ENCODE measurements at regions of chr1 and their contacts with region 1.

Region 1: GRCh38 chr1:172532700-172533509 is at the start of gene SUCO:
- DNase-seq: peak; percentile 100
- H3K4me3 ChIP-seq: peak within 1 kb of the TSS; percentile 87 to 96
- H3K27ac ChIP-seq: peak within 1 kb of the TSS; percentile 98 to 99
- H3K4me1 ChIP-seq: peaks cover 0 to 27% (median 22%) of the 10 kb centered on the region in 4 donors
- H3K27me3 ChIP-seq: no peaks in the 10 kb centered on the region
- CTCF ChIP-seq: no peak

Region 2: DNA sequence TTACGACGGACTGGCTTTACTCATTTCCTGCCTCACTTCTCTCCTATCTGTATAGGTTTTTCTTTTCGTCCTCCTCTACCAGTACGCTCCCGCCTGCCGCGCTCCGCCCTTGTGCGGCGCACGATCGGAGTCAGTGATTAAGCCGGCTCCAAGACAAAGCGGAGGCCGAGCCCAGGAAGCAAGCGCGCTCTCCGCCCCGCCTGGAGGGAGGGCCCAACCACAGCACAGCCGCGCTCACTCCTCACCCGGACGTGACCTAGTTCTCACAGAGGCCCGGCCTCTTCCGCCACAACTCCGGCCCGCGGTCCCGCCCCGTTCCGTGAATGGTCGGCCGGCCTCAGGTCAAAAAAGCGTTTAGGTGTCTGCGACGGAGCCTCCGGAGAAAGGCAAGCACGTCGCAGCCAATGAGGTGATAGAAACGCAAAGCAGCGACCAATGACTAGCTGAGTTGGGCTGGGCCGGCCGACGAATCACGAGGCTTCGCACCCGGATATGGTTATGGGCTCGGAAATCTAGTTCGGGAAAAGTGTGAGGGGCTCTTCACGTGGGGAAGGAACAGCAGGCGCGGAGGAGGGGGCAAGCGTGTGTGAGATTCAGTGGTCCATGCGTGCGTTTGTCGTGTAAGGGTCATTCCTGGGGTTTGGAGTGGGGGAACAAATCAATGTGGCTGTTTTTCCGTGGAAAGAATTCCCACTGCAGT is 751.6 kb before region 1 on chr1 and contains the start of gene METTL13:
- intact Hi-C with region 1: loop called (anchors 10 kb)
- DNase-seq: peak; percentile 99
- H3K4me3 ChIP-seq: peak within 1 kb of the TSS; percentile 71 to 76
- H3K27ac ChIP-seq: peak within 1 kb of the TSS; percentile 85
- H3K4me1 ChIP-seq: peaks cover 0 to 43% (median 25%) of the 10 kb centered on the region in 4 donors
- H3K27me3 ChIP-seq: no peaks in the 10 kb centered on the region
- CTCF ChIP-seq: no peak

Region 3: GRCh38 chr1:171801487-171801891 is 731.4 kb before region 1 on chr1:
- intact Hi-C with region 1: no loop called
- DNase-seq: no peak
- H3K4me3 ChIP-seq: no peak overlapping the region
- H3K27ac ChIP-seq: no peak overlapping the region
- H3K4me1 ChIP-seq: peaks cover 0 to 6% (median 2%) of the 10 kb centered on the region in 4 donors
- H3K27me3 ChIP-seq: no peaks in the 10 kb centered on the region
- CTCF ChIP-seq: peak; percentile 68 to 70

Region 4: DNA sequence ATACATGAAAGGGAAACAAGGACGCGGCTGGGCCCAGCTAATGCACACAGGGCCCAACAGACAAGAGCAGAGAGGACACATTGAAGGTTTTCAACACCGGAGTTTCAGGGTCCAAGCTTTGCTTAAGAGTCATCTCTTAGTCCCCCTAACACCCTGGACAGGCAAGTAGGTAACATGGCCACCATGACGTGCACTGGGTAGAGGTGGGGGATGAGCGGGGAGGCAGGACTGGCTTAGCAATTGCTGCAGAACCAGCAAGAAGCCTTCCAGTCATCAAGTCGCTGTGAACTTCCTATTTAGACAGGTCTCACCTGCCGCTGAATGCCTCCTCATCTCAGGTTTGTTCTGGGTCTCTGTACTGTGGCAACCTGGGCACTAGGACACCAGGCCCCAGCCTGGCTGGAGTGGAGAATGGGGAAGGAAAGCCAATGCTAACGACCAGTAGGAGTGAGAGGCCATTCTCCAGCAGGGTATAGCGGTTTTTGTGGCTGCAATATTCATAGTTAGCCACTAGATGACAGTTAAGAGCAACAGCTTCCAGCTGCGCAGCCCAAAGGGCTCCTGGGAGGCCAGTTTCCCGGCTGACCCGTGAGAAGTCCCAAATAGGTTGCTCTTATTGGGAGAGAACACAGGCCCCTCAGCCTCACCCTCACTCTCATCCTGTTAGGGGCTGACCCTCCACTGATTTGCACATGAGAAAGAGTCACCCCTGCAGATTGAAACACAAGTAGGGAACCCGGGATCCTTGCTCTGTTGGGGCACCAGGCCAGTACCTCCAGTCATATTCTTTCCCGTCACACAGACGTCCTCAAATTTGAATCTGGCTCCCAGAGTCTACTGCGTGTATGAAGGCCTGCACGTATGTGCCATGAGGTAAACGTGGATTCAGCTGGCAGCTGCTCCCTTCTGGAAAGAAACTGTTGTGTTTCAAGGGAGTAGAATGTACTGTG is 83.0 kb before region 1 on chr1:
- intact Hi-C with region 1: loop called (anchors 10 kb)
- DNase-seq: peak; percentile 47 to 66
- H3K4me3 ChIP-seq: peak overlapping the region in 1 of 2 donors; percentile 17
- H3K27ac ChIP-seq: no peak overlapping the region
- H3K4me1 ChIP-seq: peaks cover 0 to 13% (median 2%) of the 10 kb centered on the region in 4 donors
- H3K27me3 ChIP-seq: no peaks in the 10 kb centered on the region
- CTCF ChIP-seq: peak; percentile 82 to 92

Region 5: DNA sequence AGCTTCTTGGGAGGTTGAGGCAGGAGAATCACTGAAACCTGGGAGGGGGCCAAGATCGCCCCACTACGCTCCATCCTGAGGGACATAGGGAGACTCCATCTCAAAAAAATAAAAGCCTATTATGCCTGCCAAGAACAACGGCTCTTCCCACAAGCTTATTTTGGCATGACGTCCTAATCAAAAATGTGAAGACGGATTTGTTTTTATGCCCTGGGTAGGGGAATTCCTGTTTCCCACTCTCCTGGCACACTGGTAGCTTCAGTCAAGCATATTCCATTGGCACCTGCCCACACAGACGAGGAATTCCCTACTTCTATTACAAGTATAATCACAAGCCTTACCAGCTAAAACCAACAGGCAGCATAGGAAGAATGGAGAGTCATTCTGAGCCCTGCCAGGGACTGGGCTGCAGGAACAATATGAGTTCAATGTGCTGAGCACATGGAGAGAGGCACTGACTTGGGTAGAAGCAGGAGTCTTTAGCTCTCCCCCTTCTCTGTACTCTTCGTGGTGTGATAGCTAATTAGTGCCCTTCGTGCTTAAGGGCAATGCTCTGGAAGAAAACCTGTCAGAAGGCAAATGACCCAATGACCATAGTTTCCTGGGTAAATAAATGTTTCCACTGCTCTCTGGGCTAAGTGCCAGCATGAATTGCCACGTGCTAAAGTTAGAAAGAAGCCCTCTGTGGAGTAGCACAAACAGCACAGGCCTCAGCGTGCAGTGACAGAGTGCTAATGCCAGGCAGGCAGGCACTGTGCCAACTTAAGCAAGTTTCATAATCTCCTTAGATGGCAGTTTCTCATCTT is 657.4 kb after region 1 on chr1:
- intact Hi-C with region 1: loop called (anchors 10 kb)
- DNase-seq: peak; percentile 90 to 95
- H3K4me3 ChIP-seq: no peak overlapping the region
- H3K27ac ChIP-seq: peak overlapping the region; percentile 56 to 71
- H3K4me1 ChIP-seq: peaks cover 0 to 23% (median 19%) of the 10 kb centered on the region in 4 donors
- H3K27me3 ChIP-seq: no peaks in the 10 kb centered on the region
- CTCF ChIP-seq: no peak

Measured in tibial artery (tissue), 4 donors.